ENCODE measurements at regions of chr1 and their contacts with region 1.

Region 1: DNA sequence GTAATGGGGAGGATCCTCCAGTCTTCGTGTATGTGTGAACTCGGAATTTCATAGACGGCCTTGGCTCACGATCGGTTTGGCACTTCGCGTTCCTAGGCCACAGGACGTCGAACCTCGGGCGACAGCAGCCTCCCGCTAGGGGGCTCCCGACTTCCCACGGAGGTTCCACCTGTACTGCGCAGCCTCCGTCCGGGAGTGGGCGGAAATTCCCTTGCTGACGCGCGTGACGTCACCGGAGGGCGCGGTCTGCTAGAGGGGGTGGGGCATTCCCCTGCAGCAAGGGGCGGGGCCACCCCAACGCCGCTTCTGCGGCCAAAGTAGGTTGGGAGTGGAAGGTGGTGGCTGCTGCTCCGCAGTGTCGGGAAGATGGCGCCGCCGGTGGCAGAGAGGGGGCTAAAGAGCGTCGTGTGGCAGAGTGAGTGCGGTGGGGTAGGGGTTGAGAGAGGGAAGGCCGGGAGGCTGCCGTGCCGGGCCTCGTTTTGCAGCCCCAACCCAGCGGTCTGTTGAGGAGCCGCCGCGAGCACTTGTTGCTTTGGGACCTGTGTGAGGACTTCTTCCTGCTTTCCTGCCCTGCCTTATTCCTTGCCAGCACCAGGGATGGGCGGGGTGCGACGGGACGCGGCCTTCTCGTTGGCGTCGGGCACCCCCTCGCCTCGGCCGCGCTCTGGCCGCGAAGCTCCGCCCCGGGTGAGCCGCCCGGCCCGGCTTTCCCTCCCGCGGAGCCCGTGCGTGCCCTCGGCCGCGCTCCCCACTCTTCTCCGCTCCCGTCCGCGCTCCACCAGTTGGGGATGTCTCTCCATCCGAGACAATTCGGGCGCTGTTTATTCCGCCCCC is at the start of gene STXBP3:
- DNase-seq: peak; percentile 99
- H3K4me3 ChIP-seq: peak within 1 kb of the TSS; percentile 68 to 95 (median 86)
- H3K27ac ChIP-seq: peak within 1 kb of the TSS; percentile 92 to 99 (median 98)
- H3K4me1 ChIP-seq: peaks cover 0 to 39% (median 22%) of the 10 kb centered on the region in 4 donors
- H3K27me3 ChIP-seq: no peaks in the 10 kb centered on the region
- CTCF ChIP-seq: peak; percentile 87 to 93 (median 90)
- EP300 ChIP-seq: peak in 2 of 4 donors; percentile 21 to 69
- POLR2A ChIP-seq: peak; percentile 97 to 99
- total RNA-seq, gene STXBP3: 48.2 to 105 (median 94.1) TPM

Region 2: GRCh38 chr1:108208724-108209429 is 537.7 kb before region 1 on chr1:
- intact Hi-C with region 1: no loop called
- DNase-seq: no peak
- H3K4me3 ChIP-seq: no peak overlapping the region
- H3K27ac ChIP-seq: no peak overlapping the region
- H3K4me1 ChIP-seq: no peaks in the 10 kb centered on the region
- H3K27me3 ChIP-seq: peaks cover 0 to 13% (median 0%) of the 10 kb centered on the region in 3 donors
- CTCF ChIP-seq: no peak
- EP300 ChIP-seq: no peak
- POLR2A ChIP-seq: no peak

Region 3: GRCh38 chr1:108559215-108560186 is 187.1 kb before region 1 on chr1 and contains the start of gene EEIG2:
- intact Hi-C with region 1: loop called (anchors 2 kb)
- DNase-seq: peak; percentile 90
- H3K4me3 ChIP-seq: peak within 1 kb of the TSS; percentile 51 to 75 (median 63)
- H3K27ac ChIP-seq: peak within 1 kb of the TSS; percentile 72 to 78 (median 76)
- H3K4me1 ChIP-seq: peaks cover 0 to 23% (median 11%) of the 10 kb centered on the region in 4 donors
- H3K27me3 ChIP-seq: no peaks in the 10 kb centered on the region
- CTCF ChIP-seq: peak in 2 of 4 experiments; percentile 29 to 85
- EP300 ChIP-seq: no peak
- POLR2A ChIP-seq: no peak
- total RNA-seq, gene EEIG2: 11.0 to 17.2 (median 13.4) TPM

Region 4: DNA sequence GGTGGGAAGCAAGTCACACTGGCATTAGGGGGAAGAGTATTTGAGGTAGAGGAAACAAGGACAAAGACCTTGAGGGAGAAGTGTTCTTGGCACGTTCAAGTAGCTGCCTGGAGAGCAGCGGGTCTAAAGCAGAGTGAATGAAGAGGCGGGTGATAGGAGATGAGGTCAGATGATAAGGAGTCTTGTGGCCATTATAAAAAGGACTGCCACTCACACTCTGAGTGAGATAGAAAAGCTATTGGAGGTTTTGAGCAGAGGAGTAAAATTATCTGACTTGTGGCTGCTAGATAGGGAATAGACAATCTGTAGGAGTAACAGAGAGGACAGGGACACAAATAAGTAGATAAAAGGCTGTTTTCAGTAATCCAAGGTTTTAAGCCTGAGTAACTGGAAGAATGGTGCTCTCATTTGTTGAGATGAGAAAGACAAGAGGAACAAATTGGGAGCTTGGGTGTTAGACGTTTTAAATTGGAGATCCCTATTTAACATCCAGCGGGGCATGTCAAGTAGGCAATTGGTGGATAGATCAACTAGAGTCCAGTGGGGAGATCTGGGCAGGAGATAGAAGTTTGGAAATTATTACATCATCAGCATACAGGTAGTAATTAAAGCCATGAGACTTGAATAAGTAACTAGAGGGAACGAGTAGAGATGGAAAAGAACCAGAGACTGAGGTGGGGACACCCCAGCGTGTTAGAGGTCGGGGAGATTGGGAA is 129.4 kb before region 1 on chr1:
- intact Hi-C with region 1: no loop called
- DNase-seq: no peak
- H3K4me3 ChIP-seq: no peak overlapping the region
- H3K27ac ChIP-seq: no peak overlapping the region
- H3K4me1 ChIP-seq: no peaks in the 10 kb centered on the region
- H3K27me3 ChIP-seq: no peaks in the 10 kb centered on the region
- CTCF ChIP-seq: no peak
- EP300 ChIP-seq: no peak
- POLR2A ChIP-seq: no peak

Region 5: DNA sequence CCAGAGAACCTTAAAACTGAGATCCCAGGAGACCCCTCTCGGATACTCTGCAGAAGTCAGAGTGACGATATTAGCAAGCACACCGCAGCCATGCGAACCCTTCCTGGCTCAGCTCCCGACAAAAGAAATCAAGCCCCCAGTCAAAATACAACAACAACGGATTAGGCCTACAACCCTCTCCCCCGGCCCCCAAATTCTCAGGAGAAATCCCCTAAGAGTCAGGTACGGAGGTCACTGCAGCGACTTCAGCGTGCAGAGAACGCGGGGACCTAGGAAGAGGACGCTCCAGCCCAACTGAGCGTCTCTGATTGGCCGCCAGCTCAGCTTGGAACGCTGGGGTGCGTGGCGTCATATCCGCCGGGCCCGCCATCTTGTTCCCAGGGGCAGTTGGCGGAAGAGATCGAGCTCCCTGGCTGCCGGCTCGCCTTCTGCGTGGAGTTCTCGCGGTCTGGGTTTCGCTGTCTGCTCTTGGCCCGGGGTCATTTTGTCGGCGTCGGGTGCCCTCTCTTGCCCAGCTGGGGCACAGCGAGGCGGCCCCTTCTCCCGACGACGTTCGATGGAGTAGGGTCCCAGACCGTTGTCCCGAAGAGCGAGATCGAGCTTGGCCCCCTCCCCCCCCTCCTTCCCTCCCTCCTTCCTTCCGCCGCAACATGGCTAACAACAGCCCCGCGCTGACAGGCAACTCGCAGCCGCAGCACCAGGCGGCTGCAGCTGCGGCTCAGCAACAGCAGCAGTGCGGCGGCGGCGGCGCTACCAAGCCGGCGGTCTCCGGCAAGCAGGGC is 54.5 kb before region 1 on chr1 and contains the start of gene PRPF38B:
- intact Hi-C with region 1: loop called (anchors 1 kb)
- DNase-seq: peak; percentile 97
- H3K4me3 ChIP-seq: peak within 1 kb of the TSS; percentile 84 to 88 (median 86)
- H3K27ac ChIP-seq: peak within 1 kb of the TSS; percentile 96 to 98 (median 97)
- H3K4me1 ChIP-seq: peaks cover 0 to 35% (median 33%) of the 10 kb centered on the region in 4 donors
- H3K27me3 ChIP-seq: no peaks in the 10 kb centered on the region
- CTCF ChIP-seq: no peak
- EP300 ChIP-seq: no peak
- POLR2A ChIP-seq: peak; percentile 91 to 94
- total RNA-seq, gene PRPF38B: 24.7 to 28.0 (median 26.1) TPM

Region 6: DNA sequence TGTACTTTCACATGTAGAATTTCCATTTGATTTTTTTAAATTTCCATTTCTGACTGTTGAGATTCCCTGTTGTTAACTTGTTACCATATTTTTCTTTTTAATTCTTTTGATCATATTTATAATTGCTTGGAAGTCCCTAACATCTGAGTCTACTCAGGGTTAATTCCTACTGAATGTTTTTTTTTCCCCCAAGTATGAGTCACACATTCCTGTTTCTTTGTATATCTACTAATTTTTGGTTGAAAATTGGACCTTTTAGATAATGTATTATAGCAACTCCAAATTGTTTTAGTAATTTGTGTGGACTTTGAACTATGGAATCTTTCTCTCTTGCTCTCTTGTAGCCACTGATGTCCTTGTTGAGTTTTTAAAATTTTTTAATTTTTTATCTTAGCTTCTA is 54.5 kb after region 1 on chr1:
- intact Hi-C with region 1: loop called (anchors 10 kb)
- DNase-seq: no peak
- H3K4me3 ChIP-seq: no peak overlapping the region
- H3K27ac ChIP-seq: no peak overlapping the region
- H3K4me1 ChIP-seq: no peaks in the 10 kb centered on the region
- H3K27me3 ChIP-seq: no peaks in the 10 kb centered on the region
- CTCF ChIP-seq: no peak
- EP300 ChIP-seq: no peak
- POLR2A ChIP-seq: no peak

Region 7: GRCh38 chr1:108877348-108878159 is 131.0 kb after region 1 on chr1:
- intact Hi-C with region 1: loop called (anchors 5 kb)
- DNase-seq: no peak
- H3K4me3 ChIP-seq: peak overlapping the region; percentile 86 to 97 (median 96)
- H3K27ac ChIP-seq: peak overlapping the region; percentile 89 to 95 (median 90)
- H3K4me1 ChIP-seq: peaks cover 0 to 29% (median 23%) of the 10 kb centered on the region in 4 donors
- H3K27me3 ChIP-seq: no peaks in the 10 kb centered on the region
- CTCF ChIP-seq: no peak
- EP300 ChIP-seq: no peak
- POLR2A ChIP-seq: no peak

Region 8: DNA sequence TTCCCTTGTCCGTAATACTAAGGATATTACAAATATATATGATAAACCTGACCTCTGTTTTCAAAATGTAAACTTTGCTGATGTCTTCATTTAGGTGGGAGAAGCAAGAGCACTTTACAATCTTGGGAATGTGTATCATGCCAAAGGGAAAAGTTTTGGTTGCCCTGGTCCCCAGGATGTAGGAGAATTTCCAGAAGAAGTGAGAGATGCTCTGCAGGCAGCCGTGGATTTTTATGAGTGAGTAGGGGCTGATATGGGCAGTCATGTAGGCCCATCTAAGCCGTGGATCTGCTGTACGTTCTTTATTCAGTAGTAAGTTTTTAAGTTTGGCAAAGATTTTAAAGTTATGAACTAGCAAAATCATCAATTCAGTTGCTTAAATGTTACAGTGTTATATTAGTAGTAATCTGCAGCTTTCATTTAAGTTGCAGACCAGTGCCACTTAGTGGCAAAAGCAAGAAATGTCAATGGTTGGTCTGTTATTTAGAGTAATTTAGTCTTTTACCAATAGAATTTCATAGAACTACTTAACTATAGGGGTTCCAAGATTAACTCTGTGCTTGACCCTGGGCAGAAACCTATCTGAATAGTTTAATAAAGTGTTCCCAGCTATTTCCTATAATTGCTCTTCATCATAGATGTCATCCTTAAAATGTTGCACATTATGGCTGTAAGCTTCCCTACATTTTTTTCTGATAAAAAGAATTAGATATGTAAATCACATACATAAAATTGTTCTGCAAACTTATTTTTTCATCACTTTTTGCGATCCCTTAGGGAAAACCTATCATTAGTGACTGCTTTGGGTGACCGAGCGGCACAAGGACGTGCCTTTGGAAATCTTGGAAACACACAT is 151.5 kb after region 1 on chr1:
- intact Hi-C with region 1: loop called (anchors 5 kb)
- DNase-seq: no peak
- H3K4me3 ChIP-seq: no peak overlapping the region
- H3K27ac ChIP-seq: peak overlapping the region in 3 of 4 donors; percentile 76 to 81 (median 79)
- H3K4me1 ChIP-seq: peaks cover 0 to 30% (median 22%) of the 10 kb centered on the region in 4 donors
- H3K27me3 ChIP-seq: no peaks in the 10 kb centered on the region
- CTCF ChIP-seq: peak; percentile 50 to 69 (median 66)
- EP300 ChIP-seq: no peak
- POLR2A ChIP-seq: no peak

Measured in sigmoid colon (tissue), 7 donors.